Activated CD4-positive, alpha-beta T cell treated with anti-CD3 and anti-CD28 coated beads for 36 hours (primary cell): ENCODE measurements at regions of chr20 and their contacts with region 1.

Region 1: GRCh38 chr20:33851842-33852466 is 40.8 kb downstream of the CHMP4B start:
- DNase-seq: no peak
- ATAC-seq: no peak
- H3K4me3 Mint-ChIP-seq: no peak overlapping the region
- H3K27ac Mint-ChIP-seq: peak overlapping the region; percentile 13
- H3K4me1 Mint-ChIP-seq: peaks cover 53% of the 10 kb centered on the region
- H3K27me3 Mint-ChIP-seq: no peaks in the 10 kb centered on the region

Region 2: DNA sequence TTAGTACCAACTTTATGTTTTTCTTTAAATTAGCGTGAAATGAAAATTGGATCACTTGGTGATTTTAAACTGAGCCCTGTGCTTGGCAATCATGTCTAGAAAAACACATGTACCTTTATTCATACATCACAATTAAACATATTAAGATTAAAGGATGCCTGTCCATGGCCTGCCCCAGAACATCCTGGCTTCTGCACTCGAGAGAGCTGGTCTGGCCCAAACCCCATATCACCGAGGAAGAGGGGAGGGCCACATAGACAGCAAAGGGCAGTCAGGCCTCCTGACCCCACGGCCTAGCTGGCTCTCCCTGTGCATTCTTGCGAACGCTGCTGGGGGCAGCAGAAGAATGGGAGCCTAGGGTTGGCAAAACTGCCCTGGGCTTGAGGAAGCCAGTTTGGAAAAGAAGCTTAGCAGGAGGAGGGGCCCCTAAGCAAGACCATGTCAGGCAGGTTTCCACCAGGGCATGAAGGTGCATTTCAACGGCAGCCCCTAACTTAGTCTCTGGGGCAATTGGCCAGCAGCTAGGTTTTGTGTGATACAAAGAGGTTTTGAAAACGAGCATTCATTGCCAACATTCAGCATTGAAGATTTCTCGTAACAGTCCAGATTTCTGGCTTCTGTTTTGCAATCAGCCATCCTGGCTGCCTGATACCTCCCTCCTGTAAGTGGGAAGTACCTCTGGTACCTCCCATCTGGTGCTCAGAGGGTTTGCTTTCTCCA is 789.7 kb before region 1 on chr20:
- CTCF ChIA-PET with region 1: no interaction called
- POLR2A ChIA-PET with region 1: no interaction called
- intact Hi-C with region 1: no loop called
- DNase-seq: no peak
- ATAC-seq: no peak
- H3K4me3 Mint-ChIP-seq: no peak overlapping the region
- H3K27ac Mint-ChIP-seq: no peak overlapping the region
- H3K4me1 Mint-ChIP-seq: no peaks in the 10 kb centered on the region
- H3K27me3 Mint-ChIP-seq: no peaks in the 10 kb centered on the region

Region 3: GRCh38 chr20:33709398-33709797 is 142.6 kb before region 1 on chr20:
- CTCF ChIA-PET with region 1: no interaction called
- POLR2A ChIA-PET with region 1: no interaction called
- intact Hi-C with region 1: no loop called
- DNase-seq: peak; percentile 43
- ATAC-seq: peak; percentile 84
- H3K4me3 Mint-ChIP-seq: no peak overlapping the region
- H3K27ac Mint-ChIP-seq: peak overlapping the region; percentile 74
- H3K4me1 Mint-ChIP-seq: peaks cover 12% of the 10 kb centered on the region
- H3K27me3 Mint-ChIP-seq: no peaks in the 10 kb centered on the region

Region 4: DNA sequence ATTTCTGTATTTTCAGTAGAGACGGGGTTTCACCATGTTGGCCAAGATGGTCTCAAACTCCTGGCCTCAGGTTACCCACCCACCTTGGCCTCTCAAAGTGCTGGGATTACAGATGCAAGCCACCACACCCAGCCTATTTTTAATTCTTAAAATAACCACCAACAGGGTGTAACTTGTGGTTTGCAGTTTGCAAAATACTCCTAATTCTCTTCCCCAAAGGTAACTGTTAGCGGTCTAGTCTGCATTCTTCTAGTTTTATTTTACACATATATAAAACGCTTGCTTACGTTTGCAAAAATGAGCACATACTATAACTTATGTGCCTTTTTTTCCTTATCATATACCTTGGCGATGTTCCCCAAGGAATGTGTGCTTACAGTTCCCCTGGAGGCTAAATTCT is 66.5 kb before region 1 on chr20:
- CTCF ChIA-PET with region 1: no interaction called
- POLR2A ChIA-PET with region 1: no interaction called
- intact Hi-C with region 1: loop called in 1 of 2 experiments (anchors 2 kb)
- DNase-seq: no peak
- ATAC-seq: no peak
- H3K4me3 Mint-ChIP-seq: no peak overlapping the region
- H3K27ac Mint-ChIP-seq: no peak overlapping the region
- H3K4me1 Mint-ChIP-seq: peaks cover 5% of the 10 kb centered on the region
- H3K27me3 Mint-ChIP-seq: no peaks in the 10 kb centered on the region

Region 5: DNA sequence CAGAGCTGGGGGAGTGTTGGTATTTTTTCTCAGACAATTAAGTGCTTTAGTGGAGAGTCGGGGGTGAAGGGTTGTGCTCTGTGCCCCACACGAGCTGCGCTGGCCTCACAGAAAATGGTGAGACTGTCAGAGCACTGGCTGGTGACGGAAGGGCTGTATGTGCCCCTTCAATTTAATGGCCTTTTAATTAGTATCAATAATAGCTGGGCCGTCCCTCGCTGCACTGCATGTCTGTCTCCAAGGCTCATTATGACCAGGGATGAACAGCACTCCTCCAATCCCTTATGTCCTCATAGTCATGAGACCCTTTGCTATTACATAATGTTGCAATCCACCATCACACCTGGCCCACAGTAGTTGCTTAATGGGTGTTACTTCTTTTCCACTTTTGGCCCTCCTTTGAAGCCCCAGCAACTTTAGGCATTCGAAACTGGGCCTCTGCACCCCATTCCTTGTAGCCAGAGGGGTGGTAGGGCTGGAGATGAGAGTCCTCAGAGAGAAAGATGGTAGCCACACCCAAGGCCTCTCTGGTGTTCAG is 132.3 kb after region 1 on chr20:
- CTCF ChIA-PET with region 1: no interaction called
- POLR2A ChIA-PET with region 1: no interaction called
- intact Hi-C with region 1: no loop called
- DNase-seq: no peak
- ATAC-seq: no peak
- H3K4me3 Mint-ChIP-seq: no peak overlapping the region
- H3K27ac Mint-ChIP-seq: no peak overlapping the region
- H3K4me1 Mint-ChIP-seq: no peaks in the 10 kb centered on the region
- H3K27me3 Mint-ChIP-seq: peaks cover 3% of the 10 kb centered on the region